ENCODE measurements at regions of chr2 and their contacts with region 1.

Region 1: GRCh38 chr2:30208452-30208851 is 22.9 kb upstream of the LBH start:
- DNase-seq: peak; percentile 62
- ATAC-seq: peak; percentile 74
- H3K4me3 Mint-ChIP-seq: no peak overlapping the region
- H3K27ac Mint-ChIP-seq: no peak overlapping the region
- H3K4me1 Mint-ChIP-seq: peaks cover 18% of the 10 kb centered on the region
- H3K27me3 Mint-ChIP-seq: no peaks in the 10 kb centered on the region

Region 2: GRCh38 chr2:28958689-28959088 is 1249.8 kb before region 1 on chr2:
- CTCF ChIA-PET with region 1: no interaction called
- POLR2A ChIA-PET with region 1: no interaction called
- intact Hi-C with region 1: no loop called
- DNase-seq: peak; percentile 50
- ATAC-seq: peak; percentile 80
- H3K4me3 Mint-ChIP-seq: no peak overlapping the region
- H3K27ac Mint-ChIP-seq: no peak overlapping the region
- H3K4me1 Mint-ChIP-seq: no peaks in the 10 kb centered on the region
- H3K27me3 Mint-ChIP-seq: no peaks in the 10 kb centered on the region

Region 3: GRCh38 chr2:30231212-30231995 is 23.0 kb after region 1 on chr2 and contains the start of gene LBH:
- CTCF ChIA-PET with region 1: interaction called, 70 read pairs
- POLR2A ChIA-PET with region 1: interaction called, 7 read pairs
- intact Hi-C with region 1: loop called in 1 of 2 experiments (anchors 1 kb)
- DNase-seq: peak; percentile 94
- ATAC-seq: peak; percentile 41
- H3K4me3 Mint-ChIP-seq: peak within 1 kb of the TSS; percentile 76
- H3K27ac Mint-ChIP-seq: peak within 1 kb of the TSS; percentile 93
- H3K4me1 Mint-ChIP-seq: peaks cover 65% of the 10 kb centered on the region
- H3K27me3 Mint-ChIP-seq: peaks cover 10% of the 10 kb centered on the region
- total RNA-seq, gene LBH: 89.6 to 108 TPM

Region 4: DNA sequence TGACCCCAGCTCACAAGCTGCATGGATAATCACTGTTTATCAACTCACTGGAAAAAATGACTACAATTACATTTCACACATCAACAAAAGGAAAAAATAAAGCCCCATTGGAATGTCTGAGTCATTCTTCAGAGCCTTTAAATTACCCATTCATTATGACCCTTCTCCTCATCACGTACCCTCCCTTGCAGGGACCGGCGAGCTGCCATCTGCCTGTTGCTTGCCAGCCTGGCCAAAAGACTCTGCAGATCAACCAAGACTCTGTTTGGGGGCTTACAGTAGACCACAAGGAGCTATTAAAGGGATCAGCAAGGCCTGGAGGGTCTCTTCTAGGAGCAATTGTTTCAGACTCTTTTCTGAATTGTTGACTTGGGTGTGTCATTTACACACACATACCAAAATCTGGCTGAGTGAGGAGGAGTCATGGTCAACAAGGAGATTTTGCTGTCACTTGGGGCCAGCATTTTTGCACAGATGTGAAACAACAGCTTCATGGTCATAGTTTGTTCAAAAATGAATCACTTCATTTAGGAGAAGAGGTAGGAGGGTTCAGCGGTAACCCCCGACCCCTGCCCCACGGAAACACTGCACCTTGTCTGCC is 64.9 kb after region 1 on chr2:
- CTCF ChIA-PET with region 1: interaction called, 12 read pairs
- POLR2A ChIA-PET with region 1: no interaction called
- intact Hi-C with region 1: no loop called
- DNase-seq: peak; percentile 73
- ATAC-seq: peak; percentile 70
- H3K4me3 Mint-ChIP-seq: peak overlapping the region; percentile 46
- H3K27ac Mint-ChIP-seq: peak overlapping the region; percentile 92
- H3K4me1 Mint-ChIP-seq: peaks cover 79% of the 10 kb centered on the region
- H3K27me3 Mint-ChIP-seq: no peaks in the 10 kb centered on the region

Region 5: GRCh38 chr2:30305235-30305634 is 96.8 kb after region 1 on chr2:
- CTCF ChIA-PET with region 1: interaction called, 10 read pairs
- POLR2A ChIA-PET with region 1: no interaction called
- intact Hi-C with region 1: no loop called
- DNase-seq: no peak
- ATAC-seq: peak; percentile 73
- H3K4me3 Mint-ChIP-seq: no peak overlapping the region
- H3K27ac Mint-ChIP-seq: no peak overlapping the region
- H3K4me1 Mint-ChIP-seq: peaks cover 30% of the 10 kb centered on the region
- H3K27me3 Mint-ChIP-seq: no peaks in the 10 kb centered on the region

Region 6: GRCh38 chr2:30629866-30630265 is 421.4 kb after region 1 on chr2:
- CTCF ChIA-PET with region 1: interaction called, 4 read pairs
- POLR2A ChIA-PET with region 1: no interaction called
- intact Hi-C with region 1: loop called in 1 of 2 experiments (anchors 5 kb)
- DNase-seq: no peak
- ATAC-seq: no peak
- H3K4me3 Mint-ChIP-seq: no peak overlapping the region
- H3K27ac Mint-ChIP-seq: no peak overlapping the region
- H3K4me1 Mint-ChIP-seq: peaks cover 32% of the 10 kb centered on the region
- H3K27me3 Mint-ChIP-seq: no peaks in the 10 kb centered on the region